AG04450 (cell line): ENCODE measurements at regions of chr3 and their contacts with region 1.

Region 1: DNA sequence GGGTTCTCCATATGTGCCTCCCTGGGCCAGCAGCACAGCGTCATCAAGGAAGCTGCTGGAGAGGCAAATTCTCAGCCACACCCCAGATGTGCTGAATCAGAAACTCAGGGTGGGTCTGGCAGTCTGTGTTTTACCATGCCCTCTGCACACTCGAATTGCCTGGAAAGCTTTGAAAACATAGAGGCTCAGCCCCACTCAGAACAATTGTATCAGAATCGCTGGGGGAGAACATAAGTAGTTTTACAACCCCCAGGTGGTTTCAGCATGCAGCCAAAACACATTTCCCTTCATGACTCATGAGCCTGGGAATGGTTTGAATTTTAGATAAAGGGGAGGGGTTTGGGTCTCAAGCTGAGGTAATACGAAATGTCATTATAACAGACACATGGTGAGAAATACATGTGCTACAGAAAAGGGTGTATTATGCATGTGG is 9.6 kb downstream of the TGM4 start:
- DNase-seq: peak; percentile 77
- H3K4me3 ChIP-seq: no peak overlapping the region
- H3K27ac ChIP-seq: peak overlapping the region; percentile 92
- H3K27me3 ChIP-seq: no peaks in the 10 kb centered on the region
- CTCF ChIP-seq: no peak

Region 2: DNA sequence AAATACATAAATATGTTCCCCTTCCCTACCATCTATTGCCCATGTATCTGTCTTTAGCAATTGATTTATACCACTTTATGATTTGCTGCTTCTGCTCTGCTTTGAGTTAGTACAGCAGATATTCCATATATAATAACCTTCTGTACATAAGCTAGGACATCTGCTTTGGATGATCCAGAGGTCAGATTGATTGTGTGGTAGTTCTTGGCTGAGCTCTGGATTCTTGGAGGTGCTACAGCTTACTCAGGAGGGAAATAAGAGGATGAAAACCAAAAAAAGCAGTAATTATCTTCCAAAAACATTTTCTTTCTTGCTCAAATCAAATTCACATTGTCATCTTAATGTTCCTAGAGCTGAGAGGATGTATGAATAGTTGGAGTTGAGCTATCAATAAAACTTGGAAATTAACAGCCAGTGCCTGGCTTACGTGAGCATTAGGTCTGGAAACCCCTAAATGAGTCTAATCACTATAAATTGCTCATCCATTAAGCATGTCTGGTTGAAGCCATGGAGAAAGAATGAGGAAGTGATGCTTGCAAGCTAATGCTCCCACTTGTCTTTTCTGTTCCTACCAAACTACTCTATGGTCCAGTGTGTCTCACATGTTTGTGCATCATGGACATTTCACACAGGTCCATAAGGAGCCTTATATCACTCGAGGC is 58.6 kb before region 1 on chr3:
- CTCF ChIA-PET with region 1: no interaction called
- POLR2A ChIA-PET with region 1: interaction called, 10 read pairs
- DNase-seq: peak; percentile 13
- H3K4me3 ChIP-seq: no peak overlapping the region
- H3K27ac ChIP-seq: no peak overlapping the region
- H3K27me3 ChIP-seq: no peaks in the 10 kb centered on the region
- CTCF ChIP-seq: no peak

Region 3: DNA sequence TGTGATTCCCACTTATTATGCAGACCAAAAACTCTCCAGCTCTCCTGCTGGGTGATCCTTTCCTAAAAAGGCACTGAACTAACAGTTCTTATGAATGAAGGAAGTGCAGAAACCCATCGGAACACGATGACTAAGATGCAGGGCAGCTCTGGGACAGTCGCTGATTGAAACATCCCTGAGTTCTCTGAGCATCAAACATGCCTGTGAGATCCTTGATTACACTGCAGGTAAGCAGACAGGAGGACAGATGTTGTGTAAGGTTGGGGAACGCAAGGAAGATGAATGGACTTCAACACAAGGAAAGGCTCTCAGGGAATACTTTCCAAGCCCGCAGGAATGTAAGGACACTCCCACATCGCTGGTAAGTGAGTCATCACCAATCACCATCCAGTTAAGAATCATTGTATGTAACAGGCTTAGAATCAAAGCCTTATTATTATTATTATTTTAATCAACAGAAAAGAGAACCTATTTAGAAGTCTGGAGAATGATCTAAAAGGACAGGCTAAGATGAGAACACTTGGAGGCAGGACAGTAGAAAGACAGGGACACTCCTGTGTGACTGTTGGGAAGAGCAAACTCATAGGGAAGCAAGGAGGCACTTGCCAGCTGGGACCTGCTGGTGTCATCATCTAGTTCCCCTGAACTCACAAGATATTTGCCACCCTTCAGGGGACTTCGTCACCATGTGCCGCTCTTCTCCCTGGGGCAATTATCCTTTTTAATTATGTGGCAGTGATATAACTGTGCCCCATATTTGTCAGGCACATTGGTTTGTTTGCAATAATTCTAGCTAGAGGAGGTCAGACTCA is 316.0 kb after region 1 on chr3:
- CTCF ChIA-PET with region 1: no interaction called
- POLR2A ChIA-PET with region 1: no interaction called
- DNase-seq: no peak
- H3K4me3 ChIP-seq: no peak overlapping the region
- H3K27ac ChIP-seq: peak overlapping the region; percentile 58
- H3K27me3 ChIP-seq: no peaks in the 10 kb centered on the region
- CTCF ChIP-seq: no peak

Region 4: GRCh38 chr3:45368382-45368781 is 484.4 kb after region 1 on chr3:
- CTCF ChIA-PET with region 1: no interaction called
- POLR2A ChIA-PET with region 1: no interaction called
- DNase-seq: no peak
- H3K4me3 ChIP-seq: no peak overlapping the region
- H3K27ac ChIP-seq: no peak overlapping the region
- H3K27me3 ChIP-seq: no peaks in the 10 kb centered on the region
- CTCF ChIP-seq: no peak